Heart left ventricle (tissue), 16 donors: ENCODE measurements at regions of chr4 and their contacts with region 1.

Region 1: GRCh38 chr4:68498413-68499007 is 51.2 kb downstream of the TMPRSS11E start:
- DNase-seq: peak in 4 of 5 donors; percentile 15 to 30 (median 22)
- ATAC-seq: peak in 2 of 4 donors; percentile 71 to 76
- H3K4me3 ChIP-seq: no peak overlapping the region
- H3K27ac ChIP-seq: no peak overlapping the region
- H3K4me1 ChIP-seq: peaks cover 0 to 9% (median 0%) of the 10 kb centered on the region in 12 donors
- H3K27me3 ChIP-seq: no peaks in the 10 kb centered on the region
- CTCF ChIP-seq: peak; percentile 62 to 88 (median 74)
- POLR2A ChIP-seq: no peak

Region 2: GRCh38 chr4:68271851-68272756 is 226.4 kb before region 1 on chr4:
- intact Hi-C with region 1: loop called in 1 of 10 experiments (anchors 10 kb)
- DNase-seq: no peak
- ATAC-seq: peak in 1 of 4 donors; percentile 78
- H3K4me3 ChIP-seq: peak overlapping the region in 8 of 12 donors; percentile 5 to 35 (median 19)
- H3K27ac ChIP-seq: no peak overlapping the region
- H3K4me1 ChIP-seq: peaks cover 0 to 6% (median 0%) of the 10 kb centered on the region in 12 donors
- H3K27me3 ChIP-seq: no peaks in the 10 kb centered on the region
- CTCF ChIP-seq: peak; percentile 60 to 83 (median 77)
- POLR2A ChIP-seq: no peak

Region 3: GRCh38 chr4:68433582-68433981 is 64.9 kb before region 1 on chr4:
- intact Hi-C with region 1: no loop called
- DNase-seq: no peak
- ATAC-seq: no peak
- H3K4me3 ChIP-seq: no peak overlapping the region
- H3K27ac ChIP-seq: no peak overlapping the region
- H3K4me1 ChIP-seq: no peaks in the 10 kb centered on the region
- H3K27me3 ChIP-seq: no peaks in the 10 kb centered on the region
- CTCF ChIP-seq: no peak
- POLR2A ChIP-seq: no peak

Region 4: DNA sequence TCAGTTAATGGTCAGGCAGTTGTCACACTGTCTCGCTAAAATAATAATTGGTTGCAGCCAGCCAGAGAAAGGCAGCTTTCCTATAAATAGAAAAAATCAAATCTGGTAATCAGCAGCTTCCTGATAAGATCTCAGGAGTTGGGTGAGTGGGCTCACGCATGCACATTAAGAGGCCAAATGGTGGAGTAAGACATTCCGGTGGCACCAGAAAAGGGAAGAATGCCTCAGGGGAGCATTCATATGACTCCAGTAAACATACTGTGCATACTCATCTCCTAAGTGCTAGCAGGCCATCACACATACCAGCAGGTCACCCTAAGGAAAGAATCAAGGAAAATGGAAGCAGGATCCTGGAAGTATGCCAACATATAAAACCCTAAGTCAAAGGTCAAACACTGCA is 131.9 kb after region 1 on chr4:
- intact Hi-C with region 1: loop called in 3 of 10 experiments (anchors 5 kb)
- DNase-seq: no peak
- ATAC-seq: no peak
- H3K4me3 ChIP-seq: no peak overlapping the region
- H3K27ac ChIP-seq: no peak overlapping the region
- H3K4me1 ChIP-seq: no peaks in the 10 kb centered on the region
- H3K27me3 ChIP-seq: no peaks in the 10 kb centered on the region
- CTCF ChIP-seq: no peak
- POLR2A ChIP-seq: no peak

Region 5: DNA sequence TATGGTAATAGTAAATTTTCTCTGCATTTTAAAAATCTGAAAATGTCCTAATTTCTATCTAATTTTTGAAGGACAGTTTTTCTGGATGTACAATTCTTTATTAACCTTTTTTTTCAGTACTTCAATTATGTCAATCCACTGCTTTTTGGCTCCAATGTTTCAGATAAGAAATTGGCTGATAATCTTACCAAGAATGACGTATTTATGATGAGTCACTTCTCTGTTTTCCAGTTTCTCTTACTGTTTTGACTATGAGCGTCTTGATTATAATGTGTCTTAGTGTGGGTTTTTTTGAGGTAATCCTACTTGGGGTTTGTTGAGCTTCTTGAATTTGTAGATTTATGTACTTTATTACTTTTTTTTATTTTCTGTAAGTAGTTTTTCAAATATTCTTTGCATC is 668.8 kb after region 1 on chr4:
- intact Hi-C with region 1: loop called in 7 of 10 experiments (anchors 5 to 10 kb)
- DNase-seq: no peak
- ATAC-seq: no peak
- H3K4me3 ChIP-seq: no peak overlapping the region
- H3K27ac ChIP-seq: no peak overlapping the region
- H3K4me1 ChIP-seq: no peaks in the 10 kb centered on the region
- H3K27me3 ChIP-seq: no peaks in the 10 kb centered on the region
- CTCF ChIP-seq: no peak
- POLR2A ChIP-seq: no peak